BJ (cell line): ENCODE measurements at regions of chr1 and their contacts with region 1.

Region 1: GRCh38 chr1:175742790-175743459 is 470 bp downstream of the TNR start:
- DNase-seq: no peak
- H3K4me3 ChIP-seq: no peak overlapping the region
- H3K27me3 ChIP-seq: no peaks in the 10 kb centered on the region
- CTCF ChIP-seq: no peak

Region 2: DNA sequence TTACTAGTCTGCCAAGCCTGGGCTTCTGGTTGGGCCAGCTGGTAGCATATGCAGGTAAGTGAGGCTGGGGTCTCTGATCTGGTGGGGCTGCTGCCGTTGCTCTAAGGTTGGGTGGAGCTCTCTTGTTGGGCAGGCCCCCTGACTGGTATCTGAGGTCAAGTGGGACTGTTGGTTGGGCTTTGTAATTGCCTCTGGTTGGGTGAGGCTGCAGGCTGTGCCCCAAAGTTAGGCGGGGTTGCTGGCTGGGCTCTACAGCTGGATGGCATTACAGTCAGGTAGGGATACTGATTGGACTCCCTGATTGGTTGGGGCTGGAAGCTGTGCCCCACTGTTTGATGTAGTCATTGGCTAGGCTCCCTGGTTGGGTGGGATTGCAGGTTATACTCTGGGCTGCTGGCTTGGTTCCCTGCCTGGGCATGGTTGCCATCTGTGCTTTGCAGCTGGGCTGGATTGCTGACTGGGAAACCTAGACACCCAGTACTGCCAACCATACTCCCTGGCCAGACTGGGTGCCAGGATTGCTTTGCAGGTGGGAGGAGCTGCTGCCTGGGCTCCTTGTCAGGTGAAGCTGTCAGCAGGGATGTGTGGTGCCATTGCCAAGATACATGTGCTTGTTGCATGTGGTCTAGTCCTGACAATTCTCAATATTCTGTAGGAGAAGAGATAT is 1453.1 kb before region 1 on chr1:
- CTCF ChIA-PET with region 1: no interaction called
- POLR2A ChIA-PET with region 1: no interaction called
- DNase-seq: no peak
- H3K4me3 ChIP-seq: no peak overlapping the region
- H3K27me3 ChIP-seq: no peaks in the 10 kb centered on the region
- CTCF ChIP-seq: no peak

Region 3: DNA sequence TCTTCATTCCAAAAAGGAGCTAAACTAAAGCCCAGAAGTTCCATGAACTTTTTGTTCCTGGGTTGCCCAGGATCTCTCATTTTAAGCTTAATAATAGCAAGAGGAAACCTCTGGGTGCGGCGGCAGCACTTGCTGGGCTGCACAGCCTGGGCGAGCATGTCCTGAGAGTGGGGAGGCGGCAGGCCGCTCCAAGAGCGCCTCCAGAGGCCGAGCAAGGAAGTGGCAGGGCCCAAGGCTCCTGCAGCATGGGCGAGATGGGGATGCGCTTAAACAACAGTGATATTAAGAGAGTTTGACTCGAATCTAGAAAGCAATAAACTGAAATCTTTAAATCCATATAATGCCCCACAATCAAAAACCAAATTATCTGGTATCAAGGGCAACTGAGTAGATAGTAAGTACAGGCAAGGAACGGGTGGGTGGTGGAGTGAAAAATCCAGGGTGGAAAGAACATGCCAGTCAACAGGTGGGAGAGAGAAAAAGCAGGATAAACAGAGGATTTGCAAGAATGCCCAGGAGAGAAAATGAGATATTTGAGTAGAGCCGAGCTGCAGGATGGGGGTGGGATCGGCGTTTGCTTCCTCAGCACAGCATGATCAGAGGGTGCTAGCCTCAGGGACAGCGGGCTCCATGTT is 14.6 kb after region 1 on chr1:
- CTCF ChIA-PET with region 1: interaction called, 21 read pairs
- POLR2A ChIA-PET with region 1: no interaction called
- DNase-seq: no peak
- H3K4me3 ChIP-seq: no peak overlapping the region
- H3K27me3 ChIP-seq: no peaks in the 10 kb centered on the region
- CTCF ChIP-seq: peak; percentile 61